ENCODE measurements at regions of chr6 and their contacts with region 1.

Region 1: GRCh38 chr6:169162752-169163591 is 90.7 kb downstream of the THBS2 start:
- DNase-seq: peak; percentile 78 to 90
- H3K4me3 ChIP-seq: peak overlapping the region; percentile 18 to 21
- H3K27ac ChIP-seq: peak overlapping the region; percentile 75 to 83
- H3K4me1 ChIP-seq: peaks cover 0 to 83% (median 39%) of the 10 kb centered on the region in 4 donors
- H3K27me3 ChIP-seq: no peaks in the 10 kb centered on the region
- CTCF ChIP-seq: no peak

Region 2: DNA sequence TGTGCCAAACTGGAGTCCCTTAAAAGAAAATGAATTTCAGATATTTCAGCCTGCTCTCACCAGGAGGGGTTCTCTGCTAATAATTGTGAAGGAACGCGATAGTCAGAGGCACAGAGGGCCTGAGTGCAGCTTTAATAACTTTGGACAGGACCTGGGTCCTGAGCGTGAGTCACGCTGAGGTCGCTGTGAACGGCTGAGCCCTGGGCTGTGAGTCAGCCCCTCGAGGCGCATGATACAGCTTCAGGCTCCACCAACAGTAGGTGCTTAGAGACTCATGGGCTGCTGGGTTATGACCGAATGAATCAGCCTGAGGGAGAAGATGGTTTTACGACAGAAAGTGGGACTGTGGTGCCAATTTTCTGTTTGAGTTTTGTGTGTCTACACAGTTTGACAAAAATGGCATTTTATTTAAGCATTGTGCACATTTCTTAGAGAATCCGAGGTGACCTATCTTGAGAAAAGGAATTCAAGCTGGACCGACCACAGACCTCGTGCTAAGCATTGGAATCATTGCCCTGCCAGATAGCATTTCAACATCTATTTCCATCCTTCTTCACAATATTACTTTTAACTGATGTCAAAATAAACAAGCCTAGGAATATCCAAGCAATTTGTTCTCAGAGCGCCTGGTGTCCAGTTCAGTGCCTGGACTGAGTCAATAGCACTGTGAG is 92.3 kb before region 1 on chr6:
- intact Hi-C with region 1: loop called (anchors 10 kb)
- DNase-seq: peak; percentile 94 to 98
- H3K4me3 ChIP-seq: no peak overlapping the region
- H3K27ac ChIP-seq: peak overlapping the region; percentile 72 to 77
- H3K4me1 ChIP-seq: peaks cover 0 to 73% (median 37%) of the 10 kb centered on the region in 4 donors
- H3K27me3 ChIP-seq: no peaks in the 10 kb centered on the region
- CTCF ChIP-seq: peak; percentile 7 to 21

Measured in tibial artery (tissue), 4 donors.